PC-3 (cell line): ENCODE measurements at regions of chr1 and their contacts with region 1.

Region 1: DNA sequence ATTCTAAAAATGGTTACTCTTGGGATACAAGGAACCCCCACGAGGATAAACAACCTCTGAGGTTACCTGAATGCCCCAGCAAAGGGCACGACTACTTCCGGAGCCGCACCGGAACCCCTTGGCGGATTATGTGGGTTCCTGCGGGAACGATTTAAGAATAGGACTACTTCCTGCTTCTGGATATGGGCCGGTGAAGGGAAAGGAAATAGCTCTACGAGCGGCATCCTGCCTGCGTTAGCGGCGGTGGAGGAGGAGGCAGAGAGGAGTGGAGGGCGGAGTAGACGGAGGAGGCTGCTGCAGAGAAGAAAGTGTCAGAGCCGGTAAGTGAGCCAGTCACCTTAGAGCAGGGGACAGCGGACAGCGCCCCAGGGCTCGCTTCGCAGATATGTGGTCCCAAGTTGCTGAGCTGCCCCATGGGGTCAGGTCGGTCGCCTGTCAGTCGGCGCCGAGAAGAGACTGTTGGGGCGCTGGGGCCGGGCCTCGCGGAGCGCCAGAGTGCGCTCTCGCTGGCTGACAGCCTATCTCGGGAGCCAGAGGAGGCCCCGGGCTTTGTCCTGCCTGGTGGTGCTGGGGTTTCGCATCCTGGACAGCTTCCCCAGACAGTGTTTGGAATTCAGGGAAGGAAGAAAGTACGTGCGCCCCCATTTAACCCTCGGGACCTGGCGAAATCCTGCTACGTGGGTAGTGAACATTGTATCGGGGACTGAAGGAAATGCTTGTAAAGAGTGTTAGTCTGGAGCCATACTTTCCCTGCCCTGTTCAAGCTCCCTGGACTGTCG is at the start of gene KLHL20:
- DNase-seq: peak; percentile 100
- ATAC-seq: peak; percentile 97
- H3K4me3 ChIP-seq: peak within 1 kb of the TSS; percentile 72
- H3K27ac ChIP-seq: peak within 1 kb of the TSS; percentile 33
- H3K4me1 ChIP-seq: peaks cover 20% of the 10 kb centered on the region
- H3K27me3 ChIP-seq: no peaks in the 10 kb centered on the region
- CTCF ChIP-seq: peak; percentile 49
- total RNA-seq, gene KLHL20: 46.2 and 46.4 TPM in 2 replicates

Region 2: GRCh38 chr1:173269490-173270230 is 445.3 kb before region 1 on chr1:
- CTCF ChIA-PET with region 1: no interaction called
- POLR2A ChIA-PET with region 1: no interaction called
- intact Hi-C with region 1: loop called (anchors 10 kb)
- DNase-seq: peak; percentile 100
- ATAC-seq: peak; percentile 94
- H3K4me3 ChIP-seq: peak overlapping the region; percentile 3; the same call in 1 of the 2 replicates
- H3K27ac ChIP-seq: peak overlapping the region; percentile 62
- H3K4me1 ChIP-seq: peaks cover 46% of the 10 kb centered on the region
- H3K27me3 ChIP-seq: no peaks in the 10 kb centered on the region
- CTCF ChIP-seq: no peak

Region 3: GRCh38 chr1:173581383-173582079 is 133.4 kb before region 1 on chr1:
- CTCF ChIA-PET with region 1: no interaction called
- POLR2A ChIA-PET with region 1: no interaction called
- intact Hi-C with region 1: no loop called
- DNase-seq: no peak
- ATAC-seq: no peak
- H3K4me3 ChIP-seq: no peak overlapping the region
- H3K27ac ChIP-seq: no peak overlapping the region
- H3K4me1 ChIP-seq: no peaks in the 10 kb centered on the region
- H3K27me3 ChIP-seq: no peaks in the 10 kb centered on the region
- CTCF ChIP-seq: no peak

Region 4: GRCh38 chr1:173648880-173649605 is 65.9 kb before region 1 on chr1:
- CTCF ChIA-PET with region 1: no interaction called
- POLR2A ChIA-PET with region 1: no interaction called
- intact Hi-C with region 1: loop called (anchors 1 kb)
- DNase-seq: peak; percentile 97
- ATAC-seq: peak; percentile 97
- H3K4me3 ChIP-seq: no peak overlapping the region
- H3K27ac ChIP-seq: peak overlapping the region; percentile 3
- H3K4me1 ChIP-seq: peaks cover 24% of the 10 kb centered on the region
- H3K27me3 ChIP-seq: no peaks in the 10 kb centered on the region
- CTCF ChIP-seq: no peak

Region 5: DNA sequence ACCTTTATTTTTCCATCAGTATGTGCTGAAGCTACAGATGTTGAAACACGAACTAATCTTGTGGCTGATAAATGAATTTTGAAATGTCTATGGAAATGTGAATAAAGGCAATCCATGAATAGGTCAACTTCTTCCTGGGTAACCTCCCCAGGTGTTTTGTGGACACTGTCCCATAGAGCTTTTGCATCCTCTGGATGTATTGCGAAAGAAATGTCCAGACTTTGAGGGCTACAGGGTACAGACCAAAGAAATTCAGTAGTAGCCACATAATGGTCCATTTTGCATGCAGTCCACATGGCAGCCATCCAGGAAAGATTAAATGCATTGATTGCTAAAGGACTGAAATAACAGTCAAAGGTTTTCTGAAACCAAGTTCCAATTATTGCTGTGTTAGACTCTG is 88.0 kb after region 1 on chr1:
- CTCF ChIA-PET with region 1: no interaction called
- POLR2A ChIA-PET with region 1: no interaction called
- intact Hi-C with region 1: no loop called
- DNase-seq: no peak
- ATAC-seq: no peak
- H3K4me3 ChIP-seq: no peak overlapping the region
- H3K27ac ChIP-seq: no peak overlapping the region
- H3K4me1 ChIP-seq: peaks cover 7% of the 10 kb centered on the region; the same call in 1 of the 2 replicates
- H3K27me3 ChIP-seq: no peaks in the 10 kb centered on the region
- CTCF ChIP-seq: no peak

Region 6: DNA sequence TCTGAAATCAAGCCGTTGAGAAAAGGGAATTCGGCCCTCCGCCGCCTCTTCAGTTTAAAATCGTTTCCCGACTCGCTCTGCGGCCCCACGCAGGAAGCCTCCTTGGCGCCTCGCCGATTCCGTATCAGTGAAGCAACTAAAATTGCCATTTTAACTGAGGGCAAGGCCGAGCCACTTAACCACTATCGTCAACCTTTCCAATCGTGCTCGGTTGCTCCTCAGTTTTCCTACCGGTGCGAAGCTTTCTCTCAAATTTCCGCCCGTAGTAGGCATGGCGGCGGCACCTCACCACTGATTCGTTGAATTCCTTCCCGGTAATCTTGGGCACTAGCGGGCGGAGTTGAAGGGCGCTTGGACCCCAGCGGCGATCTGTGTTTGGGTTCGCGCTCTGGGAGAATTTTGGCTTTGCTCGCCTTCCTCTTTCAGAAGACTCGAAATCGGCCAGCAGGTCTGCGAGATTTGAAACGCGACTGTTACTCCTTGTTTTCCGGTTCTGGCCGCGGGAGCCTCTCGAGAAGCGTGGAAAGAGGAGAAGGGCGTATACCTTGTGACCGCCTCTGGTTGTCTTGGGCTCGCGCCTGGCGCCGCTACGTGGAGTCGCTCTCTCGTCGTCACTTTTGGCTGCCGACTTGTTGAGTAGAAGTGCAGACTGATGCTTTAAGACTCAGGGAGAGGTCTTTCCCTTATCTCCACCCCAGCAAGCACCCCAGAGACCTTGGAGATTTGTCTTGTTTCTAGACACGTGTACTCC is 109.6 kb after region 1 on chr1 and contains the starts of genes CENPL and DARS2:
- CTCF ChIA-PET with region 1: interaction called, 4 read pairs
- POLR2A ChIA-PET with region 1: interaction called, 12 read pairs
- intact Hi-C with region 1: loop called (anchors 1 kb)
- DNase-seq: peak; percentile 100
- ATAC-seq: peak; percentile 88
- H3K4me3 ChIP-seq: peak within 1 kb of the TSS; percentile 72
- H3K27ac ChIP-seq: peak within 1 kb of the TSS; percentile 81
- H3K4me1 ChIP-seq: peaks cover 56% of the 10 kb centered on the region
- H3K27me3 ChIP-seq: no peaks in the 10 kb centered on the region
- CTCF ChIP-seq: no peak
- total RNA-seq, gene CENPL: 92.8 and 108 TPM in 2 replicates
- total RNA-seq, gene DARS2: 71.8 and 77.3 TPM in 2 replicates